Adrenal gland (tissue), 19 donors: ENCODE measurements at regions of chr18 and their contacts with region 1.

Region 1: GRCh38 chr18:76620321-76621170 is 125.5 kb upstream of the ZNF516 start:
- DNase-seq: peak; percentile 68 to 90 (median 79)
- H3K4me3 ChIP-seq: peak overlapping the region in 2 of 4 donors; percentile 33 to 50
- H3K27ac ChIP-seq: peak overlapping the region in 4 of 5 donors; percentile 83 to 97 (median 96)
- H3K4me1 ChIP-seq: peaks cover 30 to 37% of the 10 kb centered on the region in 2 donors
- H3K27me3 ChIP-seq: no peaks in the 10 kb centered on the region
- CTCF ChIP-seq: peak; percentile 36 to 60 (median 53)
- POLR2A ChIP-seq: no peak

Region 2: DNA sequence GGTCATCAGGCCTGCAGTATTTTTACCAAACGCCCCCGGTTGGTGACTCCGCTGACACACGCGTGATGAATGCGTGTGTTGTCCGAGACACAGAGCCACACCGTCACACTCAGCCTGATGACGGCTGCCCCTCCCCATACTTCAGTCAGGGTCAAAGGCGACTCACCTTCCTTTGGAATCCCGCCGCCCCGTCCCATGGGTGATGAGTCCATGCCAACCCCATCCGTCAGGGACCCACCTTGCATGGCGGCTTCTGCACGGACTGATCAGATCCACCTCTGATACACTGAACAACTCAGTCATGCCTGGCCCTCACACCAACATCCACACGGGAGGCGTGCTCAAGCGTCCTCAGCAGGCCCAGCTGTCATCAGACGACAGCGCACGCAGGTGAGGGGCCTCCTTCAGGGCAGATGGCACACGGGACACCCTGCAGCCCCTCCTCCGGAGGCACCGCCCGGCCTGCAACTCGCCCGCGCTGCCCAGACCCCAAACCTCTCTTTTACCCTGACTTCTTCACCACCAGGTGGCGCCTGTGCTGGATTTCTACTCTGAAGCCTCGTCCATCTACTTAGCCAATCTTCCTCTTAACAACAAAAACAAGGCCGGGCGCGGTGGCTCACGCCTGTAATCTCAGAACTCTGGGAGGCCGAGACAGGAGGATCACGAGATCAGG is 214.7 kb before region 1 on chr18:
- intact Hi-C with region 1: loop called (anchors 10 kb)
- DNase-seq: peak in 6 of 7 donors; percentile 53 to 88 (median 72)
- H3K4me3 ChIP-seq: no peak overlapping the region
- H3K27ac ChIP-seq: peak overlapping the region in 1 of 5 donors; percentile 22
- H3K4me1 ChIP-seq: peaks cover 0 to 30% of the 10 kb centered on the region in 2 donors
- H3K27me3 ChIP-seq: no peaks in the 10 kb centered on the region
- CTCF ChIP-seq: peak; percentile 38 to 76 (median 65)
- POLR2A ChIP-seq: no peak

Region 3: DNA sequence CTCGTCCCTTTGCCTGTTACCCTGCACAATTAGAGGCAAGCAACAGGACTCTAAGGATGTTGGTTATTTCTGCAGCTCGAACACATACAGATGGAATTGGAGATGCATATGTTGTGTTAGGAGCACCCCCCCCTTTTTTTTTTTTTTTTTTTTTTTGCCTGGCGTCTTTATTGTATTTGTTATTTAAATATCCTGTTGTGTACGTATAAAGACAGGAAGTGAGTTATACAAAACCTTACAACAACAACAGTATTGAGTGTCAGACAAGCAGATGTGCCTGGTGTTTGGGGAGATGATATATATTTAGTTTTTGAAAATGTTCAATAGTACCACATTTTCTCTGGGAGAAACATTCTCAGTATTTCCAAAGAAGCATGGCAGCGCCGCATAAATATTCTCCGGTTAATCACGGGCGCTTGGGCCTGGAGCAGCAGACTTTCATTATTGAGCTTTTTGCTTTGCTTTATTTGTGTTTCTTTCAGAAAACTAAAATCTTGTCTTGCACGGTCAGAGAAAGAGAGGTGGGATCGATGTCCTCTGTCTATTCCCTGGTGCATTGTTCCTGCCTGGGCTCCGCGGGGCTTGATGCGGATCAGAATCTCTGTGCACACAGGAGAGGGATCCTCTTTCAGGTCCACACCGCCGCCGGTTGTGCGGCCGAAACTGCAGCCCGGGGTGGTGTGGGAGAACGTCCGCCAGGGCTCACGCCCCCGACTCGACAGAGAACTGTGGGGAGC is 102.3 kb before region 1 on chr18:
- intact Hi-C with region 1: loop called in 1 of 2 experiments (anchors 10 kb)
- DNase-seq: peak; percentile 57 to 74 (median 67)
- H3K4me3 ChIP-seq: peak overlapping the region in 3 of 4 donors; percentile 12 to 54 (median 45)
- H3K27ac ChIP-seq: peak overlapping the region; percentile 10 to 84 (median 73)
- H3K4me1 ChIP-seq: peaks cover 6 to 12% of the 10 kb centered on the region in 2 donors
- H3K27me3 ChIP-seq: no peaks in the 10 kb centered on the region
- CTCF ChIP-seq: peak in 1 of 6 experiments; percentile 11
- POLR2A ChIP-seq: peak in 1 of 2 donors; percentile 21

Region 4: GRCh38 chr18:76565238-76566180 is 55.0 kb before region 1 on chr18:
- intact Hi-C with region 1: loop called in 1 of 2 experiments (anchors 5 kb)
- DNase-seq: peak; percentile 67 to 92 (median 87)
- H3K4me3 ChIP-seq: peak overlapping the region in 3 of 4 donors; percentile 2 to 52 (median 19)
- H3K27ac ChIP-seq: peak overlapping the region; percentile 64 to 92 (median 89)
- H3K4me1 ChIP-seq: peaks cover 10 to 15% of the 10 kb centered on the region in 2 donors
- H3K27me3 ChIP-seq: no peaks in the 10 kb centered on the region
- CTCF ChIP-seq: no peak
- POLR2A ChIP-seq: peak; percentile 7 to 70

Region 5: GRCh38 chr18:76672627-76673026 is 52.1 kb after region 1 on chr18:
- intact Hi-C with region 1: loop called in 1 of 2 experiments (anchors 5 kb)
- DNase-seq: no peak
- H3K4me3 ChIP-seq: no peak overlapping the region
- H3K27ac ChIP-seq: no peak overlapping the region
- H3K4me1 ChIP-seq: no peaks in the 10 kb centered on the region
- H3K27me3 ChIP-seq: no peaks in the 10 kb centered on the region
- CTCF ChIP-seq: no peak
- POLR2A ChIP-seq: no peak

Region 6: GRCh38 chr18:76756531-76757253 is 136.1 kb after region 1 on chr18:
- intact Hi-C with region 1: no loop called
- DNase-seq: no peak
- H3K4me3 ChIP-seq: no peak overlapping the region
- H3K27ac ChIP-seq: no peak overlapping the region
- H3K4me1 ChIP-seq: no peaks in the 10 kb centered on the region
- H3K27me3 ChIP-seq: no peaks in the 10 kb centered on the region
- CTCF ChIP-seq: no peak
- POLR2A ChIP-seq: no peak

Region 7: GRCh38 chr18:76892832-76893231 is 272.3 kb after region 1 on chr18:
- intact Hi-C with region 1: no loop called
- DNase-seq: no peak
- H3K4me3 ChIP-seq: no peak overlapping the region
- H3K27ac ChIP-seq: no peak overlapping the region
- H3K4me1 ChIP-seq: no peaks in the 10 kb centered on the region
- H3K27me3 ChIP-seq: no peaks in the 10 kb centered on the region
- CTCF ChIP-seq: no peak
- POLR2A ChIP-seq: no peak